ENCODE measurements at regions of chr2 and their contacts with region 1.

Region 1: GRCh38 chr2:23698721-23699492 is 228.0 kb downstream of the ATAD2B start:
- DNase-seq: no peak
- H3K4me3 ChIP-seq: no peak overlapping the region
- H3K27ac ChIP-seq: no peak overlapping the region
- H3K4me1 ChIP-seq: no peaks in the 10 kb centered on the region
- H3K27me3 ChIP-seq: no peaks in the 10 kb centered on the region
- CTCF ChIP-seq: no peak
- POLR2A ChIP-seq: no peak

Region 2: DNA sequence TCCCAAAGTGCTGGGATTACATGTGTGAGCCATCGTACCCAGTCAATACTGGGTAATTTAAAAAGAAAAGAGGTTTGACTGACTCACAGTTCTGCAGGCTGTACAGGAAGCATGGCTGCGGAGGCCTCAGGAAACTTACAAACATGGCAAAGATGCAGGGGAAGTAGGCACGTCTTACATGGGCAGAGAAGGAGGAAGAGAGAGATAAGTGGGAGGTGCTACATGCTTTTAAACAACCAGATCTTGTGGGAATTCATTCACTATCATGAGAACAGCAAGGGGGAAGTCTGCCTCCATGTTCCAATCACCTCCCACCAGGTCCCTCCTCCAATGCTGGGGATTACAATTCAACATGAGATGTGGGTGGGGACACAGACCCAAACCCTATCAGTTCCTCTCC is 35.5 kb after region 1 on chr2:
- intact Hi-C with region 1: loop called (anchors 2 kb)
- DNase-seq: no peak
- H3K4me3 ChIP-seq: no peak overlapping the region
- H3K27ac ChIP-seq: no peak overlapping the region
- H3K4me1 ChIP-seq: no peaks in the 10 kb centered on the region
- H3K27me3 ChIP-seq: no peaks in the 10 kb centered on the region
- CTCF ChIP-seq: no peak
- POLR2A ChIP-seq: no peak

Region 3: DNA sequence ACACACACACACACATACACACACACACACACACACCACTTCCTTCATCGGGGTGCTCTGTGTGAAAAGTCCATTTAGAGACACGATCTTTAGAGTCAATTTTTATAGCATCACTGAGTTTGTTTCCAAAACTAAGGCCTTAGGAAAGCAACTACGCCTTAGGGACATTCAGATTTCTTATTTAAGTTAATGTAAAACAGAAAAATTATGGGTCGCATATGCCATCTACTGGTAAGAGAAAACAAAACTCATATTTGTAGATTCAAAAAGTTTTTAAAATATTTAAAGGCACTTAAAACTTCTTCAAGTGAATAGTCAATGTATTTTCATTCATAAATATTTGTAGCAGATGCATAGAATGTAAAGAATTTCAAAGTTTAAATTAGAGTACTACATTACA is 61.8 kb after region 1 on chr2:
- intact Hi-C with region 1: no loop called
- DNase-seq: no peak
- H3K4me3 ChIP-seq: no peak overlapping the region
- H3K27ac ChIP-seq: peak overlapping the region in 1 of 2 donors; percentile 10
- H3K4me1 ChIP-seq: no peaks in the 10 kb centered on the region
- H3K27me3 ChIP-seq: no peaks in the 10 kb centered on the region
- CTCF ChIP-seq: peak; percentile 37 to 47 (median 42)
- POLR2A ChIP-seq: no peak